ENCODE measurements at regions of chr11 and their contacts with region 1.

Region 1: GRCh38 chr11:75342903-75343870 is 8.3 kb downstream of the ARRB1 start:
- DNase-seq: no peak
- ATAC-seq: no peak
- H3K4me3 ChIP-seq: no peak overlapping the region
- H3K4me3 Mint-ChIP-seq: peak overlapping the region in 8 of 10 donors; percentile 6 to 84 (median 40)
- H3K27ac ChIP-seq: peak overlapping the region; percentile 31
- H3K27ac Mint-ChIP-seq: peak overlapping the region; percentile 30 to 98 (median 84)
- H3K4me1 ChIP-seq: peaks cover 35 to 93% of the 10 kb centered on the region in 2 donors
- H3K4me1 Mint-ChIP-seq: peaks cover 84 to 100% (median 98%) of the 10 kb centered on the region in 7 donors
- H3K27me3 ChIP-seq: no peaks in the 10 kb centered on the region
- H3K27me3 Mint-ChIP-seq: no peaks in the 10 kb centered on the region

Region 2: DNA sequence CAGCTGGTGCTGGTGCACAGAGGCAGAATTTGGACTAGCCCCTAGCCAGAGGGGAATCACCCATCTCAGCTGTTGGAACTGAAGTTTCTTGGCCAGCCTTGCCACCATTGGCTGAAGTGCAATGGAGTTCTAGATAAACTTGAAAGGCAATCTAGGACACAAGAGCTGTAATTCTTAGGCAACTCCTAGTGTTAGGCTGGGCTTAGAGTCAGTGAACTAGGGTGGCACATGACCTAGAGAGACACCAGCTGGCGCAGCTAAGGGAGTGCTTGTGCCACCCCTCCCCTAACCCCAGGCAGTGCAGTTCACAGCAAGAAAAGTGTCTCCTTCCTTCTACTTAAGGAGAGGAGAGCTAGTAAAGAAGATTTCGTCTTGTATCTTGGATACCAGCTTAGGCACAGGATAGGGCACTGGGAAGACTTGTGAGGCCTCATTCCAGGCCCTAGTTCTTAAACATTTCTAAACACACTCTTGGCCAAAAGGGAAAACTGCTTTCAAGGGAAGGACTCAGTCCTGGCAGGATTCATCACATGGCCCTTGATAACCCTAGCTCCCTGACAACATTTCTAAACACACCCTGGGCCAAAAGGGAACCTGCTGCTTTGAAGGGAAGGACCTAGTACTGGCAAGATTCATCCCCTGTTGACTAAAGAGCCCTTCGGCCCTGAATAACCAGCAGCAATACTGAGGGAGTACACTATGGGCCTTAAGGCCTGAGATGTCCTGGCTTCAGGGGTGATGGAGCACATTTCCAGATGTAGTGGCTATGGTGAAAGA is 447.7 kb before region 1 on chr11:
- CTCF ChIA-PET with region 1: no interaction called
- POLR2A ChIA-PET with region 1: no interaction called
- intact Hi-C with region 1: no loop called
- DNase-seq: no peak
- ATAC-seq: no peak
- H3K4me3 ChIP-seq: no peak overlapping the region
- H3K4me3 Mint-ChIP-seq: no peak overlapping the region
- H3K27ac ChIP-seq: no peak overlapping the region
- H3K27ac Mint-ChIP-seq: peak overlapping the region in 2 of 9 donors; percentile 7 to 54
- H3K4me1 ChIP-seq: no peaks in the 10 kb centered on the region
- H3K4me1 Mint-ChIP-seq: peaks cover 0 to 6% (median 0%) of the 10 kb centered on the region in 7 donors
- H3K27me3 ChIP-seq: no peaks in the 10 kb centered on the region
- H3K27me3 Mint-ChIP-seq: no peaks in the 10 kb centered on the region

Region 3: GRCh38 chr11:75328426-75329277 is 14.5 kb before region 1 on chr11:
- CTCF ChIA-PET with region 1: interaction called, 33 read pairs
- POLR2A ChIA-PET with region 1: interaction called, 94 read pairs
- intact Hi-C with region 1: loop called (anchors 1 kb)
- DNase-seq: peak in 8 of 9 donors; percentile 44 to 82 (median 66)
- ATAC-seq: peak; percentile 92
- H3K4me3 ChIP-seq: no peak overlapping the region
- H3K4me3 Mint-ChIP-seq: peak overlapping the region; percentile 9 to 75 (median 68)
- H3K27ac ChIP-seq: peak overlapping the region; percentile 58
- H3K27ac Mint-ChIP-seq: peak overlapping the region; percentile 79 to 96 (median 91)
- H3K4me1 ChIP-seq: peaks cover 16 to 54% of the 10 kb centered on the region in 2 donors
- H3K4me1 Mint-ChIP-seq: peaks cover 47 to 88% (median 80%) of the 10 kb centered on the region in 7 donors
- H3K27me3 ChIP-seq: no peaks in the 10 kb centered on the region
- H3K27me3 Mint-ChIP-seq: no peaks in the 10 kb centered on the region

Region 4: GRCh38 chr11:75383246-75383645 is 40.1 kb after region 1 on chr11:
- CTCF ChIA-PET with region 1: interaction called, 12 read pairs
- POLR2A ChIA-PET with region 1: interaction called, 14 read pairs
- intact Hi-C with region 1: loop called in 1 of 2 experiments (anchors 5 kb)
- DNase-seq: peak in 7 of 9 donors; percentile 30 to 55 (median 41)
- ATAC-seq: peak; percentile 78
- H3K4me3 ChIP-seq: no peak overlapping the region
- H3K4me3 Mint-ChIP-seq: peak overlapping the region; percentile 15 to 80 (median 58)
- H3K27ac ChIP-seq: peak overlapping the region; percentile 57
- H3K27ac Mint-ChIP-seq: peak overlapping the region; percentile 65 to 93 (median 88)
- H3K4me1 ChIP-seq: peaks cover 6 to 17% of the 10 kb centered on the region in 2 donors
- H3K4me1 Mint-ChIP-seq: peaks cover 16 to 31% (median 25%) of the 10 kb centered on the region in 7 donors
- H3K27me3 ChIP-seq: no peaks in the 10 kb centered on the region
- H3K27me3 Mint-ChIP-seq: peaks cover 0 to 10% (median 0%) of the 10 kb centered on the region in 5 donors